Activated naive CD4-positive, alpha-beta T cell treated with anti-CD3 and anti-CD28 coated beads for 36 hours (primary cell): ENCODE measurements at regions of chr4 and their contacts with region 1.

Region 1: DNA sequence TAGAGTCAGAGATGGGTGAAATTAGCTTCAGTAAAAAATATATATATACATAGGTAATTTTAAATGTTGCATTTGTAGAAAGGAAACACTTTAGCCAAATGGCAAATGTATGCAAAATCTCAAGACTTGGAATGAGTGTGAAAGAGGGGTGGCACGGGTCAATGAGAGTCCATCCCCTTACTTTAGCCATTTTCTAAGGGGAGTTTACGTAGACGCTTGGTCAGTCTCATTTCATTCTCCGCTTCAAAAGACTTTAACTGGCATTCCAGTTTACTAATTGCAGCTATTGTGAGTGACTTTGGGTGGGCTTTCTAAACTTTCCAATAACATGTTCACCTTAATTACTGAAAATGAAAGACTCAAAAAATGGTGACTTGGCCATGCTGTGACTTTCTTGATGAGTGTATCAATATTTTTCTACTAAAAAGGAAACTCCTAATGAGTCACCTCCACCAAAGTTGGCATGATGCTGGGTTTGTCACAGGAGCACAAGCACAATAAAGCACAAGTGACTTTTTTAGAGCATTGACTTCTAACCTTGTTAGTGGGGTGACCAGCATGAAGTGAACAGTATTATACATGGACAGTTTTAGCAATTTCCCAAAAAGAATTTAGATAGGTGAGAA is 356.0 kb upstream of the RASGEF1B start:
- DNase-seq: peak; percentile 69
- H3K4me3 Mint-ChIP-seq: no peak overlapping the region
- H3K27ac Mint-ChIP-seq: no peak overlapping the region
- H3K4me1 Mint-ChIP-seq: peaks cover 13% of the 10 kb centered on the region
- H3K27me3 Mint-ChIP-seq: peaks cover 5% of the 10 kb centered on the region

Region 2: GRCh38 chr4:80072744-80073472 is 1754.8 kb before region 1 on chr4 and contains the start of gene ANTXR2:
- CTCF ChIA-PET with region 1: no interaction called
- intact Hi-C with region 1: no loop called
- DNase-seq: peak; percentile 64
- H3K4me3 Mint-ChIP-seq: peak within 1 kb of the TSS; percentile 84
- H3K27ac Mint-ChIP-seq: peak within 1 kb of the TSS; percentile 82
- H3K4me1 Mint-ChIP-seq: peaks cover 76% of the 10 kb centered on the region
- H3K27me3 Mint-ChIP-seq: peaks cover 2% of the 10 kb centered on the region
- total RNA-seq, gene ANTXR2: 0.50 to 0.79 TPM

Region 3: DNA sequence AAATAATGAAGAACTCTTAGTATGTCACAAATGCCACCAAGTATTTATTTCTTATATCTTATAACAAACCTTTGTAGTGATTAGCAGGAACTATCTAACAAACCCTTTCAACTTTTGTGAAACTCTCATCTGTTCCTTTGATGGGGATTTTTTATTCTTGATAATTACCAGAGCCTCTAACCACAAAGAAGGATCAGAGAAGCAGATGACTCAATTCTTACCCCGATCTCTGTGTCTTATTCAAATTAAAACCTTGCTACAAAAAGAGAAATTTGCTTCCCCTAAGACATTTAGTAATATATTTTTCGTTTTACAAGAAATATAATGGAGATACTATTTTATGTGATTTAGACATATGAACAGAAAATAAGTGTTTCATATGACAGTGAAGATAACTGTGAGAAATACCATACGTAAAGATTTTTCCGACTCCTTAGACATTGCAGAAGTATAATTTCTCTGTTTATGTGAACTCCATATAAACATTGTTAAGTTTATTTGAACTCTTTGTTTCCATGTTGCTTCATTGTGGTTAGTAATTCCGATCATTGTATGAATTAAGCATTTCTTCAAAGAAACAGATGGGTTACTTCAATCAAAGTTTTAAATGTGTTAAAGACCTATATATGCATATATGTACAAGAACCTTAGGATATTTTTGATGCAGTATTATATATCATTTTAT is 1286.8 kb before region 1 on chr4:
- CTCF ChIA-PET with region 1: no interaction called
- intact Hi-C with region 1: loop called (anchors 2 kb)
- DNase-seq: no peak
- H3K4me3 Mint-ChIP-seq: no peak overlapping the region
- H3K27ac Mint-ChIP-seq: peak overlapping the region; percentile 41
- H3K4me1 Mint-ChIP-seq: peaks cover 48% of the 10 kb centered on the region
- H3K27me3 Mint-ChIP-seq: peaks cover 34% of the 10 kb centered on the region

Region 4: DNA sequence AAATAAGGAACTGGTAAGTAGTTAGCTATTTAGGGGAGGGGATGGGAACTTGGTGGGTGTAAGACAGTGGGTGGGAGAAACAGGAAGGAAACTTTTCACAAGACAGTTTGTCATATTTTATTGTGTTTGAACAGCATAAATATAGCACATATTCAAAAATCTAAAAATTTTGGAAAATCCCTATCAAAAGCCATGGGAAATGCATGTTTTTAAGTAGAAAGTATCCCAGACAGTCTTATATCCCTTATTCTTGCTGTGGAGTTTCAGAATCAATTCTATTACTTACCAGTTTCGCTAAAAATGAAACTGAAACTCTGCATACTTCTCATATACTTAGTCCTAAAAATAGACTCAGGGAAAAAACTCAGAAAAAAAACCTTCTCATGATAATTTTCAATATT is 333.7 kb before region 1 on chr4:
- CTCF ChIA-PET with region 1: no interaction called
- intact Hi-C with region 1: loop called (anchors 1 kb)
- DNase-seq: no peak
- H3K4me3 Mint-ChIP-seq: no peak overlapping the region
- H3K27ac Mint-ChIP-seq: peak overlapping the region; percentile 30
- H3K4me1 Mint-ChIP-seq: peaks cover 46% of the 10 kb centered on the region
- H3K27me3 Mint-ChIP-seq: no peaks in the 10 kb centered on the region

Region 5: GRCh38 chr4:81505004-81505598 is 322.6 kb before region 1 on chr4:
- CTCF ChIA-PET with region 1: interaction called, 3 read pairs
- intact Hi-C with region 1: loop called (anchors 2 kb)
- DNase-seq: peak; percentile 86
- H3K4me3 Mint-ChIP-seq: peak overlapping the region; percentile 25
- H3K27ac Mint-ChIP-seq: peak overlapping the region; percentile 37
- H3K4me1 Mint-ChIP-seq: peaks cover 42% of the 10 kb centered on the region
- H3K27me3 Mint-ChIP-seq: no peaks in the 10 kb centered on the region

Region 6: DNA sequence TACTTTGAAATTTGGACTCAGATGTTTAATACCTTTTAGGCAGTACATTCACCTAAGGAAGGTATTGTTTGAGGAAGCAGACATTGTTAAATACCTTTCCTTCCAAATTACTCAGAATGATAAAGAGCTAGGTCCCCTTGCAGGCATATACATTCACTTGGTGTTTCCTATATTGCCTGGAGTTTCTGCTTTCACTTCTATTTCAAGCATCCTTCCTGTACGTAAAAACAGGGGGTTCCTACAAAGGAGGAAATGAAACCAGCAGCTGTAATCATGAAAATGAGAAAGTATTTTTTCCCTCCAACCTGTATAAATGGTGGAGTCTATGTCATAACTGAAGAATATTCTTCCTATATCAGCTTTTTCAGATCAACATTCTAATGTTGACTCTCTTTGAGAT is 265.6 kb before region 1 on chr4:
- CTCF ChIA-PET with region 1: no interaction called
- intact Hi-C with region 1: loop called (anchors 2 kb)
- DNase-seq: no peak
- H3K4me3 Mint-ChIP-seq: no peak overlapping the region
- H3K27ac Mint-ChIP-seq: no peak overlapping the region
- H3K4me1 Mint-ChIP-seq: peaks cover 21% of the 10 kb centered on the region
- H3K27me3 Mint-ChIP-seq: no peaks in the 10 kb centered on the region

Region 7: GRCh38 chr4:81839347-81840042 is 11.8 kb after region 1 on chr4:
- CTCF ChIA-PET with region 1: no interaction called
- intact Hi-C with region 1: loop called (anchors 1 kb)
- DNase-seq: peak; percentile 53
- H3K4me3 Mint-ChIP-seq: no peak overlapping the region
- H3K27ac Mint-ChIP-seq: no peak overlapping the region
- H3K4me1 Mint-ChIP-seq: peaks cover 22% of the 10 kb centered on the region
- H3K27me3 Mint-ChIP-seq: no peaks in the 10 kb centered on the region

Region 8: DNA sequence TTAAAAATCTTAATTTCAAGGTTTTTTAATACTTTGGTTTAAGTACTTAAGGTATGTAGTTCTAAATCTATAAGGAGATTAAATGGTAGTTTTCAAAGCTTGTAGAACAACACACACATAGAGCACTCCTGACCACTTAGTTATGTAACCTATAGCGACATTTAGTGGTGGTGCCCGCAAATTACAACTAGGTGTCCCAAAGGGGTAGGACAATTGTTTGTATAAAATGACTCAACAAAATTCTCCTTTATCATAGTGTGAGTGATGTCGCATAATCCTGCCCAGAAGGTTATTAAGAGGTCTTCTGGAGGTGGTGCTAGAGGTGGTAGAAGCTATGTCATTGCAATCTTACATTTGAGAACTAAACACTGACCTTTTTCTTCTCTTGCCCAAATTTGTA is 17.0 kb after region 1 on chr4:
- CTCF ChIA-PET with region 1: no interaction called
- intact Hi-C with region 1: loop called (anchors 1 kb)
- DNase-seq: peak; percentile 89
- H3K4me3 Mint-ChIP-seq: no peak overlapping the region
- H3K27ac Mint-ChIP-seq: no peak overlapping the region
- H3K4me1 Mint-ChIP-seq: peaks cover 13% of the 10 kb centered on the region
- H3K27me3 Mint-ChIP-seq: no peaks in the 10 kb centered on the region